ENCODE measurements at regions of chr9 and their contacts with region 1.

Region 1: GRCh38 chr9:114397848-114398605 is 10.2 kb upstream of the AKNA start:
- DNase-seq: peak; percentile 98
- H3K4me3 Mint-ChIP-seq: peak overlapping the region; percentile 89
- H3K27ac Mint-ChIP-seq: peak overlapping the region; percentile 90
- H3K4me1 Mint-ChIP-seq: peaks cover 51% of the 10 kb centered on the region
- H3K27me3 Mint-ChIP-seq: peaks cover 16% of the 10 kb centered on the region

Region 2: DNA sequence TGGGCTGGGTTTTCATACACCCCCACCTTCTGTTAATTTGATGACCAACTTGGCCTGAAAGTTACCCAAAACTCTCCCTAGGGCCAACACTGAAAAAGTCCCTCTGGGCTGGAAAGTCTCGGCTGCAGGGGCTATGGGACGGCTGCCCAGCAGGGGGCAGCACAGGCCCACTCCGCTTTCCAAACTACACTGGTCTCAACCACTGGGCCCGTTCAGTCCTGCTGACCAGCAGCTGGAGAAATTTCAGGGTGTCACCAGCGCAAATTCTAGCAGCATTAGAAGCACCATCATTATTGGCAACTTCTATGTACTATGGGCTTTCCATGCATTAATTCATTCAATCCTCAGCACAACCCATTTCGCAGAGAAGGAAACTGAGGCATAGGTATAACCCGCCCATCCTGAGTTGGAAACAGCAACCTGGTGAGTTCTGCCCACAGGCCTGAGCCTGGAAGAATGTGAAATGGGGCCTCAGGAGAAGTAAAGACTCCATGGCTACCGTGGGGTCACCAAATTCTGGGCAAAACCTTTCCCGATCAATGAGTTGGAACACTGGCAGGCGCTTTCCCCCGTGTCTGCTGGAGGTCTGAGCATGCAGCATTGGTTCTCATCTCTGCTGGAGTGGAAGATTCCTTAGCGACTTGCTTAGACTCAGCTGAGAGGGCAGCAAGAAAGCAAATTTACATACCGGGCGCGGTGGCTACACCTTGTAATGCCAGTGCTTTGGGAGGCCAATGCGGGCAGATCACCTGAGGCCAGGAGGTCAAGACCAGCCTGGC is 58.7 kb before region 1 on chr9:
- CTCF ChIA-PET with region 1: interaction called, 10 read pairs
- DNase-seq: peak; percentile 62
- H3K4me3 Mint-ChIP-seq: no peak overlapping the region
- H3K27ac Mint-ChIP-seq: peak overlapping the region; percentile 24
- H3K4me1 Mint-ChIP-seq: peaks cover 14% of the 10 kb centered on the region
- H3K27me3 Mint-ChIP-seq: no peaks in the 10 kb centered on the region

Measured in activated naive CD4-positive, alpha-beta T cell treated with anti-CD3 and anti-CD28 coated beads, Interleukin-2, amount 10 ng/mL, durations not matched to agents 7 days and 5 days (primary cell).